Transverse colon (tissue), 4 donors: ENCODE measurements at regions of chr14 and their contacts with region 1.

Region 1: DNA sequence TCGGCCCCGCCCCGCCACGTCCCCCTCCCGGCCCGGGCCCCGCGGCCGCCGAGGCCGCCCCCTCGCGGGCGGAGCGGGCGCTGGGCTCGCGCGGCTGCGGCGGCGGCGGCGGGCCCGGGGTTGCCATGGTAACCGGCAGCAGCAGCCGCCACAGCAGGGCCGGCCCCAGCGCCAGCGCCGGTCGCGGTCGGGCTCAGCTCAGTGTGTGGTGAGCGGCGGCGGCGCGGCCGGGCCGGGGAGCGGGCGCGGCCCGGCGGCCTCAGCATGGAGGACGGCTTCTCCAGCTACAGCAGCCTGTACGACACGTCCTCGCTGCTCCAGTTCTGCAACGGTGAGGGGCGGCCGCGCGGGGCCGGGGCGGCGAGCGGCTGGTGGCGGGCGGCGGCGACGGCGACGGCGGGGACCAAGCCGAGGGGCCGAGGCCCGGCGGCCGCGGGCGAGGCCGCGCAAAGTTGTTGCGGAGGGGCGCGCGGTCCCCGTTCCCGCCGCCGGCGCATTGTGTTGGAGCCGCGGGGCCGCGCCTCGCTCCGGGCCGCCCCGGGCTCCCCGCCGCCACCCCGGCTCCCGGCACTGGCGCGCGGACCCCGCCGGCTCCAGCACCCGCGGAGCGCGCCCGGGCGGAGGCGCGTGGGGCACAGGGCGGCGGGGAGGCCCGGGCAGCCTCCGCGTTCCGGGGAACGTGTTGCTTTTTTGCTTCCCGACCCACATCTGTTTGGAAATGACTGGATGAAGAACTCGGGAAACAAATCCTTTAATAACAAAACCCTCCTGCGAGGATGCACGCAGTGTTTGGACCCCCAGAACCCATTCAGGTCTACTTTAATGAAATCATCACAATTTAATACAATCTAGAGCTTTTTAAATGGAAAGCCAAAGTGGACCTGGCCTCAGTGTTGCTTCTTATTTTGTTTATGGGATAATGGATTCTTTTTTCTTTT is at the start of gene EML1:
- DNase-seq: peak; percentile 69
- H3K4me3 ChIP-seq: peak within 1 kb of the TSS; percentile 31 to 50 (median 39)
- H3K27ac ChIP-seq: peak within 1 kb of the TSS; percentile 82 to 91 (median 86)
- H3K4me1 ChIP-seq: peaks cover 0 to 33% (median 18%) of the 10 kb centered on the region in 4 donors
- H3K27me3 ChIP-seq: peaks cover 70% of the 10 kb centered on the region
- CTCF ChIP-seq: no peak
- EP300 ChIP-seq: no peak
- POLR2A ChIP-seq: no peak
- total RNA-seq, gene EML1: 16.8 to 59.5 (median 21.9) TPM

Region 2: DNA sequence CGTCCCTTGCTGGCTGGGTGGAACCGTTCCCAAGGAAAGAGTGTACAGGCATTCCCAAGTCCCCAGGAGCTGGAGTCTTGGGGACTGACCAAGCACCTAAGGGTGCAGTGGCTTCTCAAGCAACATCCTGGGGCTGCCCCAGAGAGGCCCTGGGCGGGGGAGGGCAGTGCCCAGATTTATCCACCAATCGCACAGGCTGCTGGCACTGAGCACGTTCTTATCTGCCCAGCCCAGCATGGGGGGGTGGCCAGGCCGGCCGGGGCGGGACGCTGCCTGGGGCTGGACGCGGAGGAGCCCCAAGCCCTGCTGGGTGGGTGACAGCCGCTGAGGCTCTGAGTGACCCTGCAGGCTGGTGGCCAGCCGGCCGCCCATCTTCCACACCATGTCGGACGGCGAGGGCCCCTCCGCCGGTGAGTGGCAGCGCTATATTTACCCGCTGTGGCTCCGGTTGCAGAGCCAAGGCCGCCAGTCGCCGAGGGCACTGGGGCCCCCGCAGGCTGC is 56.0 kb before region 1 on chr14:
- in situ Hi-C with region 1: no loop called
- intact Hi-C with region 1: loop called (anchors 5 kb)
- DNase-seq: no peak
- H3K4me3 ChIP-seq: peak overlapping the region; percentile 11 to 55 (median 39)
- H3K27ac ChIP-seq: peak overlapping the region; percentile 61 to 82 (median 82)
- H3K4me1 ChIP-seq: peaks cover 0 to 20% (median 9%) of the 10 kb centered on the region in 4 donors
- H3K27me3 ChIP-seq: peaks cover 22% of the 10 kb centered on the region
- CTCF ChIP-seq: no peak
- EP300 ChIP-seq: no peak
- POLR2A ChIP-seq: no peak

Region 3: GRCh38 chr14:100885617-100886016 is 1092.1 kb after region 1 on chr14:
- in situ Hi-C with region 1: no loop called
- intact Hi-C with region 1: no loop called
- DNase-seq: no peak
- H3K4me3 ChIP-seq: no peak overlapping the region
- H3K27ac ChIP-seq: no peak overlapping the region
- H3K4me1 ChIP-seq: peaks cover 0 to 20% (median 8%) of the 10 kb centered on the region in 4 donors
- H3K27me3 ChIP-seq: peaks cover 4% of the 10 kb centered on the region
- CTCF ChIP-seq: no peak
- EP300 ChIP-seq: no peak
- POLR2A ChIP-seq: no peak